Aorta (tissue), 5 donors: ENCODE measurements at regions of chr10 and their contacts with region 1.

Region 1: GRCh38 chr10:94146746-94147145 is 153.0 kb downstream of the PLCE1 start:
- DNase-seq: no peak
- ATAC-seq: no peak
- H3K4me3 ChIP-seq: no peak overlapping the region
- H3K27ac ChIP-seq: peak overlapping the region; percentile 90 to 96
- H3K4me1 ChIP-seq: peaks cover 0 to 6% of the 10 kb centered on the region in 2 donors
- H3K27me3 ChIP-seq: no peaks in the 10 kb centered on the region

Region 2: DNA sequence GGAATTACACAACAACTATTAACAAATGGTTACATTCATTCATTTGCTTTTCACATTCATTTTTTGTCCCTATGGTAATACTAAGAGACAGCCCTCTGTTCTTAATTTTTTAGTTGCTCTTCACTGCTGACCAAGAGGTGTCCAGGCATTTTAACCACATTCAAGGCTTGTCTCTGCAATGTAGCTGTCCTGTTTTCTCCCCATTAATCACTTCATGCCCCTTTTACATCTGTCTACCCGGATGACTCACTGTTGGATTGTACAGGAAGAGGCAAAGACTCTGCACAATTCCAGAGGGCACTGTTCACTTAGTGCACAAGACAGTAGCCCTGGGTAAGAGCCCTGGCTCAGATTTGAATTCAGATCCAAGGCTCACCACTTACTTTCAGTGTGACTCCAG is 47.5 kb after region 1 on chr10:
- intact Hi-C with region 1: loop called (anchors 5 kb)
- DNase-seq: no peak
- ATAC-seq: peak; percentile 41
- H3K4me3 ChIP-seq: no peak overlapping the region
- H3K27ac ChIP-seq: peak overlapping the region in 1 of 2 donors; percentile 14
- H3K4me1 ChIP-seq: peaks cover 4 to 11% of the 10 kb centered on the region in 2 donors
- H3K27me3 ChIP-seq: no peaks in the 10 kb centered on the region

Region 3: GRCh38 chr10:94199565-94199964 is 52.8 kb after region 1 on chr10:
- intact Hi-C with region 1: loop called (anchors 5 kb)
- DNase-seq: no peak
- ATAC-seq: peak; percentile 74
- H3K4me3 ChIP-seq: no peak overlapping the region
- H3K27ac ChIP-seq: no peak overlapping the region
- H3K4me1 ChIP-seq: no peaks in the 10 kb centered on the region
- H3K27me3 ChIP-seq: no peaks in the 10 kb centered on the region

Region 4: DNA sequence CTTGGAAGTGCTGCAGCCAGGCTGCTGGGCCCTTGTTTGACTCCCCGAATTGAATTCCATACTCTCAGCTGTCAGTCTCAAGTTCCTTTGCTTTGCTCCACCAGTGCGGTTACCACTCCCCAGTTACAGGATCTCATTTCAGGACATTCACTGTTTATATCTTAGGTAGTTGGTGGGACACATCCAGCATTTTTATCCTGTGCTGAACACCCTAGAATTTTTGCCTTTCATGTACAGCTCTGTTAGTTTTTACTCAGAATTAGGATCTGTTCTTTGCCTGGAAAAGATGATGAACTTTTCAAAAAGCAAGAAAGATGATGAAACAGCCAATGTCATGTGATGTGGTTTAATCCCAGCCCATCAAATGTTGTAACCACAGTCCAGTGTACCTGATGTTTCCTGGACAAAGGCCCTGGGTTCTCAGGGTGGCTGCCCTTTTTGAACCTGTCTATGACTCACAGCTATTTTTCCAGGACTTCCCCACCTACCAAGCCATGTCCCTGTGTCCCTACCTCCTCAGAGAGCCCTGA is 66.3 kb after region 1 on chr10:
- intact Hi-C with region 1: loop called in 1 of 2 experiments (anchors 10 kb)
- DNase-seq: no peak
- ATAC-seq: peak; percentile 72
- H3K4me3 ChIP-seq: no peak overlapping the region
- H3K27ac ChIP-seq: peak overlapping the region in 1 of 2 donors; percentile 75
- H3K4me1 ChIP-seq: peaks cover 4 to 15% of the 10 kb centered on the region in 2 donors
- H3K27me3 ChIP-seq: no peaks in the 10 kb centered on the region

Region 5: GRCh38 chr10:94358480-94358879 is 211.7 kb after region 1 on chr10:
- intact Hi-C with region 1: no loop called
- DNase-seq: no peak
- ATAC-seq: no peak
- H3K4me3 ChIP-seq: no peak overlapping the region
- H3K27ac ChIP-seq: no peak overlapping the region
- H3K4me1 ChIP-seq: no peaks in the 10 kb centered on the region
- H3K27me3 ChIP-seq: no peaks in the 10 kb centered on the region